Naive thymus-derived CD4-positive, alpha-beta T cell (primary cell): ENCODE measurements at regions of chr12 and their contacts with region 1.

Region 1: GRCh38 chr12:68559984-68560850 is 50.5 kb upstream of the RAP1B start:
- DNase-seq: no peak
- ATAC-seq: peak; percentile 60
- H3K4me3 ChIP-seq: no peak overlapping the region
- H3K4me3 Mint-ChIP-seq: no peak overlapping the region
- H3K27ac ChIP-seq: no peak overlapping the region
- H3K27ac Mint-ChIP-seq: peak overlapping the region in 2 of 9 donors; percentile 12 to 81
- H3K4me1 ChIP-seq: peaks cover 0 to 5% of the 10 kb centered on the region in 2 donors
- H3K4me1 Mint-ChIP-seq: peaks cover 16 to 44% (median 32%) of the 10 kb centered on the region in 7 donors
- H3K27me3 ChIP-seq: no peaks in the 10 kb centered on the region
- H3K27me3 Mint-ChIP-seq: peaks cover 0 to 11% (median 0%) of the 10 kb centered on the region in 5 donors

Region 2: GRCh38 chr12:68572661-68573060 is 12.4 kb after region 1 on chr12:
- CTCF ChIA-PET with region 1: interaction called, 3 read pairs
- POLR2A ChIA-PET with region 1: interaction called, 12 read pairs
- intact Hi-C with region 1: no loop called
- DNase-seq: no peak
- ATAC-seq: no peak
- H3K4me3 ChIP-seq: no peak overlapping the region
- H3K4me3 Mint-ChIP-seq: no peak overlapping the region
- H3K27ac ChIP-seq: no peak overlapping the region
- H3K27ac Mint-ChIP-seq: peak overlapping the region in 1 of 9 donors; percentile 30
- H3K4me1 ChIP-seq: peaks cover 5 to 7% of the 10 kb centered on the region in 2 donors
- H3K4me1 Mint-ChIP-seq: peaks cover 2 to 39% (median 32%) of the 10 kb centered on the region in 7 donors
- H3K27me3 ChIP-seq: no peaks in the 10 kb centered on the region
- H3K27me3 Mint-ChIP-seq: no peaks in the 10 kb centered on the region